Endothelial cell of umbilical vein (primary cell): ENCODE measurements at regions of chr20 and their contacts with region 1.

Region 1: DNA sequence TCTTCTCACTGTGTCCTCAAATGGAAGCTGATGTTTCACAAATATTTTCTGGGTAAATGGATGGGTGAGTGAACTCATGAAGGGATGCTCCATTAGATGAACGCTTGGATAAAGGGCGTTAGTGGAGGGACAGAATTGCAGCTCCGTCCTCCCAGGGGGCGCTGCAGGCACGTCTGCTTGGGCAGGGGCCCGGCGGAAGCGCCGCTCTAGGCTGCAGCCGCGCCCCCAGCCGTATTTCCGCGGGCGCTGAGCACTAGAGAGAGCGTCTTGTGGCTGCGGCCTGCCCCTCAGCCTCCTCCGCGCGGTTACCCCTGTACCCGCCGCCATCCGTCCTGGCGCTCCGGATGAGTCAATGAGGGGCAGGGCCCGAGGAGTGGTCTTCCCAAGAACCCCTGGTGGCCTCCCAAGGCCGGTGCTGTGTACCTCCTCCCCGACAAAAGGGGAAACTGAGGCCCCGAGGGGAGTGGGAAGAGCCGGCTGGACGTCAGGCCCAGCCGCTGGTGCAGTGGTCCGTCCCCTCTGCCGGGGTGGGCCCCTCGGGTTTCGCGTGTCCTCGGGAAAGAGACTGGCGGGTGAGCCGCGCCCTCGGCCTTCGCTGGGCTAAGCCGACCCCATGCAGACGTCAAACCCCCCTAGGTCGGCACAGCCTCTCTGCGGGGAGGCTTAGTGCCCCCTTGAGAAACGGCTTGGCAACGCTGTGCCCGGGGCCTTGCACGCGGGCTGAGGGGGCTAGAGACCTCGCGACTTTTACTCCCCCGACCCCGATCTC is 11.5 kb upstream of the SNHG17 start:
- DNase-seq: peak; percentile 88
- H3K4me3 ChIP-seq: peak overlapping the region; percentile 33 to 71 (median 61)
- H3K27ac ChIP-seq: peak overlapping the region; percentile 57
- H3K4me1 ChIP-seq: peaks cover 47% of the 10 kb centered on the region
- H3K27me3 ChIP-seq: no peaks in the 10 kb centered on the region
- CTCF ChIP-seq: peak; percentile 93 to 98
- POLR2A ChIP-seq: peak; percentile 97

Region 2: DNA sequence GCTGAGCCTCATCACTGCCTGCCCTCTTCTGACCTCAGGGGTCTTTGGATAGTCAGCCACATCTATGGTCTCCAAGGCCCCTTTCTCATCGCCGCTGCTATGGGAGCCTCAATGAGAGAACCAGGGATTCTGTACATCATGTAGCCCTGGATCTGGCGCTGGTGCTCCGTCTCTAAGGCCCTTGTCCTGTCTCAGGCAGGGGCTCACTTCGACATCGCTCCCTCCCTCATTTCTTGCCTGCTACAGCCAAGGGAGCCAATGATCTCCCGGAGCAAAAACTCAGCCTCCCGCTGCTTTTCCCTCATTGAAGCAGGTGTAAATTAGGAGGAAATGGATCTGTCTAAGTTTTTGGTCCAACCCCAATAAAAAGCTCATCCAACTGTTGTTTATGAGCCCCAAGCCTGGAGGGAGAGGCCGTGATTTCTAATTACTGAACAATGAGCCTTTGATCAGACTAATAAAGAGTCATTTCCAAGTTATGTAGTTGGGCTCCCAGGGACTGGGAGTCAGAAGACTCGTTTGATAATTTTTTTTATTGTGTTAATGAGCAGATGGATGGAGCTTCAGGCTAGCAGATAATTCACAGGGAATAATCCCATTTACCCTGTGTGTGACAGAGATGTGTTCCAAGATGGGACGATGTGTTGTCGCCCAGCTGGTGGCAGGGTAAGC is 69.5 kb before region 1 on chr20:
- CTCF ChIA-PET with region 1: no interaction called
- POLR2A ChIA-PET with region 1: no interaction called
- dilution Hi-C with region 1: no loop called
- intact Hi-C with region 1: no loop called
- DNase-seq: no peak
- H3K4me3 ChIP-seq: no peak overlapping the region
- H3K27ac ChIP-seq: no peak overlapping the region
- H3K4me1 ChIP-seq: no peaks in the 10 kb centered on the region
- H3K27me3 ChIP-seq: peaks cover 10 to 16% of the 10 kb centered on the region in 2 experiments
- CTCF ChIP-seq: no peak
- POLR2A ChIP-seq: no peak

Region 3: DNA sequence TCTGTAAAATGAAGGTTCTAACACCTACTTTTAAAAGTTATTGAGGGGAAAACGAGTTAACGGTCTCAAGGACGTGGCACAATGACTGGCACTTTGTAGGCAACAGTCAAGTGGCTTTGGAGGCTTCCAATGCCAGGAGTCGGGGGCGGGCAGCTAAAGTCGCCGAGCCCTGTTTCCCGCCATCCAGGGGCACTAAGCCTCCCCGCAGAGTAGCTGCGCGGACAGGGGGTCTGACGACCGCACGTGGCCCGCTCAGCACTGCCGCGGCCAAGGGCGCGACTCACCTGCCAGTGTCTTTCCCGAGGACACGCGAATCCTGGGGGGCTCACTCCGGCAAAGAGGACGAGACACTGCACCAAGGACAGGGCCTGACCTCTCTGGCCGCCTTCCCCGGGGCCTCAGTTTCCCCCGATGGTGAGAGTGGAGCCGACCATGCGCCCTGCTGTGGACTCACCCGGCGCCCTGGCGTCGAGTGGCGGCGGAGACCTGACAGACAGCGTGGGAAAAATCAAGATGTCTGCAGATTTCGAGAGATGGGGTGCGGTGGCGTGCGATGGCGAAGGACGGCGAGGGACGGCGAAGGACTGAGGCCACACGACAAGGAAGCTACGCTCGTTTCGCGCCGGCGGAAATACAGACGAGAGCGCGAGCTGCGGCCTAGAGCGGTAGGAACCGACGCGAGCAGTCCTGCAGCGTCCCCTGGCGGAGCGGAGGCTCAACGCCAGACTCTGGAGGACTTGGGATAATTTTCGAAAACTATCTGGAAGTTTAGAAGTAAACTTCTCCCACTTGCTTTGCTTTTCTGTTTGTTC is 11.7 kb before region 1 on chr20 and contains the start of gene SNHG17:
- CTCF ChIA-PET with region 1: interaction called, 106 read pairs
- POLR2A ChIA-PET with region 1: interaction called, 40 read pairs
- dilution Hi-C with region 1: no loop called
- intact Hi-C with region 1: loop called (anchors 1 kb)
- DNase-seq: peak; percentile 89
- H3K4me3 ChIP-seq: peak within 1 kb of the TSS; percentile 70 to 84 (median 77)
- H3K27ac ChIP-seq: peak within 1 kb of the TSS; percentile 14
- H3K4me1 ChIP-seq: peaks cover 18% of the 10 kb centered on the region
- H3K27me3 ChIP-seq: peaks cover 0 to 2% of the 10 kb centered on the region in 2 experiments
- CTCF ChIP-seq: peak; percentile 100
- POLR2A ChIP-seq: peak; percentile 96
- total RNA-seq, gene SNHG17: 39.6 and 94.0 TPM in 2 replicates

Region 4: GRCh38 chr20:38472513-38473372 is 26.1 kb after region 1 on chr20 and contains the start of gene RALGAPB:
- CTCF ChIA-PET with region 1: interaction called, 41 read pairs
- POLR2A ChIA-PET with region 1: interaction called, 11 read pairs
- dilution Hi-C with region 1: no loop called
- intact Hi-C with region 1: loop called (anchors 1 kb)
- DNase-seq: peak; percentile 100
- H3K4me3 ChIP-seq: peak within 1 kb of the TSS; percentile 53 to 79 (median 70)
- H3K27ac ChIP-seq: peak within 1 kb of the TSS; percentile 50
- H3K4me1 ChIP-seq: peaks cover 15% of the 10 kb centered on the region
- H3K27me3 ChIP-seq: peaks cover 2 to 4% of the 10 kb centered on the region in 2 experiments
- CTCF ChIP-seq: peak; percentile 14 to 45
- POLR2A ChIP-seq: peak; percentile 51
- total RNA-seq, gene RALGAPB: 36.4 and 38.7 TPM in 2 replicates

Region 5: GRCh38 chr20:38485041-38485440 is 38.4 kb after region 1 on chr20:
- CTCF ChIA-PET with region 1: interaction called, 11 read pairs
- POLR2A ChIA-PET with region 1: no interaction called
- dilution Hi-C with region 1: no loop called
- intact Hi-C with region 1: no loop called
- DNase-seq: peak; percentile 56
- H3K4me3 ChIP-seq: no peak overlapping the region
- H3K27ac ChIP-seq: peak overlapping the region; percentile 30
- H3K4me1 ChIP-seq: peaks cover 8% of the 10 kb centered on the region
- H3K27me3 ChIP-seq: no peaks in the 10 kb centered on the region
- CTCF ChIP-seq: no peak
- POLR2A ChIP-seq: no peak